ENCODE measurements at regions of chr4 and their contacts with region 1.

Region 1: GRCh38 chr4:88456757-88457306 is at the start of gene HERC5:
- DNase-seq: peak; percentile 94 to 96
- H3K4me3 ChIP-seq: peak within 1 kb of the TSS; percentile 67 to 84 (median 79)
- H3K27ac ChIP-seq: peak within 1 kb of the TSS; percentile 82 to 90 (median 87)
- H3K4me1 ChIP-seq: peaks cover 0 to 22% (median 9%) of the 10 kb centered on the region in 4 donors
- H3K27me3 ChIP-seq: no peaks in the 10 kb centered on the region
- CTCF ChIP-seq: peak in 5 of 7 experiments; percentile 37 to 87 (median 63)
- EP300 ChIP-seq: no peak
- POLR2A ChIP-seq: no peak
- total RNA-seq, gene HERC5: 1.7 to 11.6 (median 6.3) TPM in 4 of 5 donors, not detected in the other

Region 2: DNA sequence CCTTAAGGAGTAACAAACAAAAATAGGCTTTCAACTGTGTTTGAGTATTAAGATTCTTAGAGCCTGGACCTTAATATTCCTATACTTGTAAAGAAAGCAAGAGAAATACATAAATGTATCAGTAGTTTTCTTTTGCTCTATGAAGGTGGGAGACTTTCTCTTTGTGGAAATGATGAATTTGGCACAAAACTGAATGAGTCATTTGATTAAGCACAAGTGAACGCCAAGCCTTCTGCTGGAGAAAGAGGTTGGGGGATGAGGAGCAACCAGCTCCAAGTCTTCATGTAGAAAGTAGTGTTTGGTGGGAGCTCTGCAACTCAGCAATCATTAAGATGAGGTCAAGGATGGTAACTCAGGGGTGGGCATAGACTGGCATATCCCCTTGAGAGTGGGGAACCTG is 574.5 kb before region 1 on chr4:
- intact Hi-C with region 1: no loop called
- DNase-seq: no peak
- H3K4me3 ChIP-seq: no peak overlapping the region
- H3K27ac ChIP-seq: no peak overlapping the region
- H3K4me1 ChIP-seq: no peaks in the 10 kb centered on the region
- H3K27me3 ChIP-seq: no peaks in the 10 kb centered on the region
- CTCF ChIP-seq: no peak
- EP300 ChIP-seq: no peak
- POLR2A ChIP-seq: no peak

Region 3: GRCh38 chr4:88223516-88223915 is 233.3 kb before region 1 on chr4:
- intact Hi-C with region 1: loop called (anchors 5 kb)
- DNase-seq: no peak
- H3K4me3 ChIP-seq: no peak overlapping the region
- H3K27ac ChIP-seq: no peak overlapping the region
- H3K4me1 ChIP-seq: peaks cover 0 to 4% (median 1%) of the 10 kb centered on the region in 4 donors
- H3K27me3 ChIP-seq: no peaks in the 10 kb centered on the region
- CTCF ChIP-seq: no peak
- EP300 ChIP-seq: no peak
- POLR2A ChIP-seq: no peak

Region 4: DNA sequence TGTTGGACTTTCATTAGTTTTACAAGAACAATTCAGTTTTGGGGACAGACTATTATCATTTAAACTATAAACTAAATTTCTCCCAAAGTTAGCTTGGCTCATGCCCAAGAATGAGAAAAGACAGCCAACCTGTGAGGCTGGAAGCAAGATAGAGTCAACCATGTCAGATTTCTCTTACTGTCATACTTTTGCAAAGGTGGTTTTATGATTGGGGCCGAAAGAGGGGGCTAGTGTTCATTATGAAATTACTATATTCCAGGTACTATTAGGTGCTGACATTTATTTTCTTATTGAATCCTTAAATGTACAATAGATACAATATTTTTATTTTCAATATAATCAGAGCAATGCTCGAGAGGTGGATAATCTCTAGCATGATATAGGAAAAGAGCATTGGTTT is 47.6 kb before region 1 on chr4:
- intact Hi-C with region 1: no loop called
- DNase-seq: no peak
- H3K4me3 ChIP-seq: no peak overlapping the region
- H3K27ac ChIP-seq: no peak overlapping the region
- H3K4me1 ChIP-seq: no peaks in the 10 kb centered on the region
- H3K27me3 ChIP-seq: no peaks in the 10 kb centered on the region
- CTCF ChIP-seq: no peak
- EP300 ChIP-seq: no peak
- POLR2A ChIP-seq: no peak

Region 5: GRCh38 chr4:88569939-88570455 is 113.2 kb after region 1 on chr4:
- intact Hi-C with region 1: no loop called
- DNase-seq: no peak
- H3K4me3 ChIP-seq: no peak overlapping the region
- H3K27ac ChIP-seq: no peak overlapping the region
- H3K4me1 ChIP-seq: no peaks in the 10 kb centered on the region
- H3K27me3 ChIP-seq: no peaks in the 10 kb centered on the region
- CTCF ChIP-seq: no peak
- EP300 ChIP-seq: no peak
- POLR2A ChIP-seq: no peak

Region 6: GRCh38 chr4:88814043-88814617 is 357.3 kb after region 1 on chr4:
- intact Hi-C with region 1: no loop called
- DNase-seq: peak in 1 of 2 donors; percentile 39
- H3K4me3 ChIP-seq: no peak overlapping the region
- H3K27ac ChIP-seq: peak overlapping the region in 1 of 5 donors; percentile 52
- H3K4me1 ChIP-seq: peaks cover 14 to 97% (median 57%) of the 10 kb centered on the region in 4 donors
- H3K27me3 ChIP-seq: no peaks in the 10 kb centered on the region
- CTCF ChIP-seq: peak in 4 of 7 experiments; percentile 14 to 16 (median 16)
- EP300 ChIP-seq: no peak
- POLR2A ChIP-seq: no peak